ENCODE measurements at regions of chr16 and their contacts with region 1.

Region 1: GRCh38 chr16:11094072-11094856 is 149.9 kb downstream of the CLEC16A start:
- DNase-seq: peak; percentile 81
- ATAC-seq: peak; percentile 85
- H3K4me3 Mint-ChIP-seq: peak overlapping the region; percentile 39
- H3K27ac Mint-ChIP-seq: peak overlapping the region; percentile 90
- H3K4me1 Mint-ChIP-seq: peaks cover 94% of the 10 kb centered on the region
- H3K27me3 Mint-ChIP-seq: no peaks in the 10 kb centered on the region

Region 2: GRCh38 chr16:10752843-10753523 is 341.3 kb before region 1 on chr16:
- CTCF ChIA-PET with region 1: no interaction called
- POLR2A ChIA-PET with region 1: no interaction called
- DNase-seq: no peak
- ATAC-seq: no peak
- H3K4me3 Mint-ChIP-seq: no peak overlapping the region
- H3K27ac Mint-ChIP-seq: no peak overlapping the region
- H3K4me1 Mint-ChIP-seq: peaks cover 13% of the 10 kb centered on the region
- H3K27me3 Mint-ChIP-seq: no peaks in the 10 kb centered on the region

Region 3: DNA sequence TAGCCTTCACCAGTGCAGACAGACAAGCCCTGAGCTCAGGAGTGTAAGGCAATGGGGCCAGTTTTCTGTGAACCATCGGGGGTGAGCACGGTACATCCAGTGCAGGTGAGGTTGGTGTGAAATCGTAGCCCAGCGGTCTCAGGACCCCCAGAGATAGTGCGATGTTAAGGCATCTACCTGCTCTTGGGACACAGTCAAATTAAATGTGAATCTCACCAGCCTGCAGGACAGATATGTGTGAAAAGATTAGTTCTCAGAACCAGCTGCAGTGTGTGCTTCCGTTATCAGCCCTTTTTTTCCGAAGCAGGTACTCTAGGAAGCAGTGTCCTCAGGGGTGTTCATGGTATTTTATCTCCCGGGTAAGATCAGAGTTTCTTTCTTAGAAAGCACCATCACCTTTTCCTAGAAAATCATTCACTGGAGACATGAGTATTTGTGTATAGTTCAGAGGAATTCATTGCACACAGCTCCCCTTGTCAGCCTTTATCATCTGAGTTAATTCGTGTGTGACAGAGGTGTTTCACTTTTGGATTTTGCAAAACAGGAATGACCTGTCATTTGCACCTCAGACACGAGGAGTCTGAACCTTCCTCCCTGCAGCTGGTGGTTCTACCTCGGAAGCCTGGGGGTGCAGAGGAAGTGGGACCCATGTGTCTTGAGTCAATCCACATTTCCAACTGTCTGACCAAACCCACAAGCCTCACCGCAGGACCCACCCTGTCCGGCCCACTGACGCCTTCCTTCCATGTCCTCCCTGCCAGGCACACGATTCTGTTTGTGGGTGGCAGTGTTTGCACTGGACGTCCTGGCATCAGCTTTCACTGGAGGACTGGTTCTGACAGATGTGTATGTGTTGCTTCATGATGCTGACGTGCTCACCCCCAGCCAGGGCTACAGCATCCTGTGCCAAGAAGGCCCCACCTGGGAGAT is 42.1 kb before region 1 on chr16:
- CTCF ChIA-PET with region 1: interaction called, 13 read pairs
- POLR2A ChIA-PET with region 1: interaction called, 13 read pairs
- DNase-seq: peak; percentile 92
- ATAC-seq: peak; percentile 83
- H3K4me3 Mint-ChIP-seq: peak overlapping the region; percentile 17
- H3K27ac Mint-ChIP-seq: peak overlapping the region; percentile 97
- H3K4me1 Mint-ChIP-seq: peaks cover 98% of the 10 kb centered on the region
- H3K27me3 Mint-ChIP-seq: no peaks in the 10 kb centered on the region

Region 4: DNA sequence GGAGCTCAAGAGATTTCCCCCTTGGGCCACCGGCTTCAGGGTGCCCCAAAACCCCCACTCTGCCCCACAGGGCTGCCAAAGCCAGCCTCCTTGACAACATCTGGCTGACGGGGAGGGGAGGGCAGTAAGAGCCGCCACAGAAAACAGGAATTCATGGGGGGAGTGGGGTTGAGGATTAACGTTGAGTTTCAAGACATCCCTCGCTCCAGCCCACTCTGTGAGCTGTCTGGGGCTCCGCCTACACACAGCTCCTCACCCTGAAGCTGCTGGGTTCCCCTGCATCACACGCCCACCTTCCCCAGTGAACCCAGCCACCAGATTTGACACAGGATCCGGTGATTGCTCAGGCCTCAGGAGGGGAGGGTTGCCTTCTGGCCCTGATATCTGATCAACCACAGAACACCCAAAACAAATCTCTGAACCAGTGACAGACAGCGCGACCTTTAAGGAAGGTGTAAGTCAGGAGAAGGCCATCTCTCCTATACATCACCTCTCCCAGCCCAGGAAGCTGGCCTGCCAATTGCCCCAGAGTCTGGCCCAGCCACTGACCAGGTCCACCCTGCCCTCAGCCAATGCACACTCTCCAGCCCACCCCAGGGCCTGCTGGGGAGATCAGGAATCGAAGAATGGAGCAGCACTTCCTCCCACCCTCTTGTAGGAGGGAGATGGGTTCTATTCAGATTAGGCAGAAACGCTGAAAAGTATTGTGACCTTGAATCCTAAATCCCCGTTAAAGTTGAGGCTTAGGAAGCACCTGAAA is 17.8 kb before region 1 on chr16:
- CTCF ChIA-PET with region 1: interaction called, 6 read pairs
- POLR2A ChIA-PET with region 1: interaction called, 10 read pairs
- DNase-seq: peak; percentile 86
- ATAC-seq: peak; percentile 88
- H3K4me3 Mint-ChIP-seq: peak overlapping the region; percentile 44
- H3K27ac Mint-ChIP-seq: peak overlapping the region; percentile 89
- H3K4me1 Mint-ChIP-seq: peaks cover 97% of the 10 kb centered on the region
- H3K27me3 Mint-ChIP-seq: no peaks in the 10 kb centered on the region

Region 5: GRCh38 chr16:11105038-11105903 is 11.0 kb after region 1 on chr16:
- CTCF ChIA-PET with region 1: interaction called, 11 read pairs
- POLR2A ChIA-PET with region 1: interaction called, 6 read pairs
- DNase-seq: peak; percentile 65
- ATAC-seq: peak; percentile 66
- H3K4me3 Mint-ChIP-seq: peak overlapping the region; percentile 17
- H3K27ac Mint-ChIP-seq: peak overlapping the region; percentile 87
- H3K4me1 Mint-ChIP-seq: peaks cover 88% of the 10 kb centered on the region
- H3K27me3 Mint-ChIP-seq: no peaks in the 10 kb centered on the region

Region 6: DNA sequence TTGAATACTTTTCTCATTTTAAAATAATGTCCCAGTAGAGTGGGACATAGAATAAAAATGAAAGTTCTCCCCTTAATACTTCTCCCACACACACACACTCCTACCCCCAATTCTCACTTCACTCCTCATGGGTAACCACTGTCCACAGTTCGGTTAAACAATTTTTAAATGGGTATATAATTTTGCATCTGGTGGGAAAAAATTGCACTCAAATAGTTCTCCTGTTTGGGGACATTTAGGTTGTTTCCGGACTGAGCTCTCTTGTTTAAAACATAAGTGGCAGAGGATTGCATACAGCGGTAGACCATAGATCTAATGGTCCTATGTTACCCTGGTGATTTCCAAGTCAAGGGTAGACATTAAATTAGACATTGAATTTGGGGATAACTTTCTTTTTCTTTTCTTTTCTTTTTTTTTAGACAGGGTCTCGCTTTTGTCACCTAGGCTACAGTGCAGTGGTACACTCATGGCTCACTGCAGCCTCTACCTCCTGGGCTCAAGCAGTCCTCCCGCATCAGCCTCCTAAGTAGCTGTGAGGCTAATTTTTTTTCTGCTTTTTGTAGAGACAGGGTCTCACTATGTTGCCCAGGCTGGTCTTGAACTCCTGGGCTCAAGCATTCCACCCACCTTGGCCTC is 23.4 kb after region 1 on chr16:
- CTCF ChIA-PET with region 1: no interaction called
- POLR2A ChIA-PET with region 1: no interaction called
- DNase-seq: no peak
- ATAC-seq: no peak
- H3K4me3 Mint-ChIP-seq: no peak overlapping the region
- H3K27ac Mint-ChIP-seq: peak overlapping the region; percentile 10
- H3K4me1 Mint-ChIP-seq: peaks cover 80% of the 10 kb centered on the region
- H3K27me3 Mint-ChIP-seq: no peaks in the 10 kb centered on the region

Measured in activated CD8-positive, alpha-beta T cell treated with anti-CD3 and anti-CD28 coated beads, Interleukin-2, amount 10 ng/mL, durations not matched to agents 7 days and 5 days (primary cell).